ENCODE measurements at regions of chr3 and their contacts with region 1.

Region 1: GRCh38 chr3:120596116-120596852 is at the start of gene NDUFB4:
- DNase-seq: peak; percentile 97
- ATAC-seq: peak; percentile 99
- H3K4me3 Mint-ChIP-seq: peak within 1 kb of the TSS; percentile 87
- H3K27ac Mint-ChIP-seq: peak within 1 kb of the TSS; percentile 94
- H3K4me1 Mint-ChIP-seq: peaks cover 8% of the 10 kb centered on the region
- H3K27me3 Mint-ChIP-seq: peaks cover 3% of the 10 kb centered on the region
- total RNA-seq, gene NDUFB4: 119 to 124 TPM

Region 2: DNA sequence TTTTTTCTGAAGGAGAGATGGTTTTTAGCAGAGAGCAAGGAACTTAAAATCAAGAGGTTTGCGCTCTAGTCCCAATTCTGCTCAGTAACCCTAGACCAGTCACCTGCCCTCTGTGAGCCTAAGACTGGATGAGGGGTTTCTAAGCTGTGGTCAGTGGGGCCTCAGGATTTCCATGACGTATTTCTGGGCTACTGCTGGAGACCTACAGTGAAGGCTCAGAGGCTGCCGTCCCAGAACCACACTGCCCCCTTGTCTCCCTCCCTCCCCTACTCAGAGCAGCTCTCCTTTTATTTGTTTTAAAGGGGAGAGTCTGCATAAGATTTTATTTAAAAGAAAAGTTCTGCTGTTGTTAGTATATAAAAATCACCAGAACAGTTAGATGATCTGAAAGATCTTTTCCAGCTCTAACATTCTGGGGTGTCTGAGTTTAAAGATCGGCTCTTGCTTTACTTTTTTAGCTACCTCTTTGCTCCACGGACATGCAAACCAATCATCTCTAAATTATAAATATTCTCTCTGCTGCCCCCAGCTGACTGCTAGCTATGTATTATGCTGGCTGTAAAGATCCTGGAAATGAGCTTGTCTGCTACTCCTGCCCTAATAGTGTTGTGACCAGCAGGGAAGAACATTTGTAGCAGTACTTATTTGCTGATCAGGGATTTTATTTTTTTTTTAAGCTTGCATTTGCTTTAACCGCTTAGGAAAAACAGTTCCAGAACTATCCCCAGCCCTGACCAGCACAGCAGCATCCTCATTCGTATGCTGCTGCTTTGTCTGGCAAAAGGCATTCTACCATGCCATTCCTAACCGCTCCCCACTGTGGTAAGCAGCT is 28.7 kb before region 1 on chr3:
- CTCF ChIA-PET with region 1: interaction called, 12 read pairs
- POLR2A ChIA-PET with region 1: interaction called, 5 read pairs
- DNase-seq: no peak
- ATAC-seq: peak; percentile 63
- H3K4me3 Mint-ChIP-seq: no peak overlapping the region
- H3K27ac Mint-ChIP-seq: no peak overlapping the region
- H3K4me1 Mint-ChIP-seq: peaks cover 2% of the 10 kb centered on the region
- H3K27me3 Mint-ChIP-seq: peaks cover 2% of the 10 kb centered on the region

Region 3: DNA sequence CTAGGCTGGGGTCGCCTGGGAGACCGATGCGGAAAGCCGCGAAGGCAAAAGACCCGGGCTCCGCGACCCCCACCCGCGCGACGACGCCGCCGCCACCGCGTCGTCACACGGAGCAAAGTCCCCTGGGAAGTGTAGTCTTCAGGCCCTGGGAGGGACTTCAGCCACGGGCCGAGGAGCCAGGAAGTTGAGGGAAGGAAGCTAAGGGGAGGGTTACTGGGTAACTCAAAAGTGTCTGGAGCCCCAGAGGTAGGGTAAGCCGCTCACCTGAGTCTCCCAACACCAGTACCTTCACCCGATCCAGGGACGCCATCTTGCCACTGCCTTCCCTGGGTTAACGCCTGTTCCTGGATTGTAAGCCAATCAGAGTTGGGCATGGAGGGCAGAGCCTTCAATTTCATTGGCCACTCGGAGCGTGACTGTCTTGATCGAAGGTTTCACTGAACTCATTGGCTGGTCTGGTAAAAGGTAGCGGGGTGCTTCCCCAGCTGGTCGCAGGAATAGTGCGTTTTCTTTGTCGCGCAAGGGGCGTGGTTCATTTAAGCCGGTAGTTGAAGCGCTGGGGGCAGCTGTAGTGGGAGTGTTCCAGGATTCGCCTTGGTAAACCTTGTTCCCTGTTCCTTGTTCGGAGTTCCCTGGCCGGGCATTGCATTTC is 146.0 kb after region 1 on chr3 and contains the starts of genes GTF2E1 and RABL3:
- CTCF ChIA-PET with region 1: interaction called, 8 read pairs
- POLR2A ChIA-PET with region 1: interaction called, 29 read pairs
- DNase-seq: peak; percentile 98
- ATAC-seq: peak; percentile 98
- H3K4me3 Mint-ChIP-seq: peak within 1 kb of the TSS; percentile 95
- H3K27ac Mint-ChIP-seq: peak within 1 kb of the TSS; percentile 98
- H3K4me1 Mint-ChIP-seq: peaks cover 24% of the 10 kb centered on the region
- H3K27me3 Mint-ChIP-seq: no peaks in the 10 kb centered on the region
- total RNA-seq, gene GTF2E1: 32.3 to 32.4 TPM
- total RNA-seq, gene RABL3: 24.4 to 25.5 TPM

Measured in activated CD8-positive, alpha-beta T cell treated with anti-CD3 and anti-CD28 coated beads, Interleukin-2, amount 10 ng/mL, durations not matched to agents 7 days and 5 days (primary cell).